ENCODE measurements at regions of chr6 and their contacts with region 1.

Region 1: GRCh38 chr6:35016502-35017321 is 124.4 kb downstream of the TCP11 start:
- DNase-seq: peak in 1 of 2 donors; percentile 64
- ATAC-seq: peak; percentile 80
- H3K4me3 ChIP-seq: peak overlapping the region; percentile 36 to 42
- H3K27ac ChIP-seq: peak overlapping the region; percentile 91 to 96
- H3K4me1 ChIP-seq: peaks cover 0 to 4% of the 10 kb centered on the region in 2 donors
- H3K27me3 ChIP-seq: no peaks in the 10 kb centered on the region

Region 2: GRCh38 chr6:33147807-33148666 is 1868.7 kb before region 1 on chr6:
- intact Hi-C with region 1: no loop called
- DNase-seq: no peak
- ATAC-seq: no peak
- H3K4me3 ChIP-seq: no peak overlapping the region
- H3K27ac ChIP-seq: no peak overlapping the region
- H3K4me1 ChIP-seq: no peaks in the 10 kb centered on the region
- H3K27me3 ChIP-seq: peaks cover 0 to 2% of the 10 kb centered on the region in 2 donors

Region 3: DNA sequence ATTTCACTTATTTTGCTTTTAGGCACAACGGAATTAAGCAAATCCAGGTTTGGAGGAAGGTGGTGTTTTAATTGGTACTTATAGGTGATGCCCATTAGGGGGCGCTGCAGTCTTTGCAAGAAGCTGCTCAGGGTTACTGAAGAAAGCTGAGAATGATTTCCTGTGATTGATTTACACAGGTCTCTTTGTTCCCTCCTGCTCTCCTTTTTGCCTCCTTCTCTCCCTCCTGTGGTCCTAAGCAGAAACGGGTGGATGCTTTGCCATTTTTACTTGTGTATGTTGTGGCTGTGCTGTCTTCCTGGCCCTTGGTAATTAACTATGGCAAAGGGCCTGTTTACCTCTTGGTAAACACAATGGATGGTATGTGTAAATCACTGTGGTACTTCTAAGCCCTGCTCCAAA is 29.9 kb before region 1 on chr6:
- intact Hi-C with region 1: loop called in 1 of 2 experiments (anchors 2 kb)
- DNase-seq: peak; percentile 64 to 85
- ATAC-seq: peak; percentile 89
- H3K4me3 ChIP-seq: no peak overlapping the region
- H3K27ac ChIP-seq: peak overlapping the region in 1 of 2 donors; percentile 38
- H3K4me1 ChIP-seq: no peaks in the 10 kb centered on the region
- H3K27me3 ChIP-seq: no peaks in the 10 kb centered on the region

Region 4: DNA sequence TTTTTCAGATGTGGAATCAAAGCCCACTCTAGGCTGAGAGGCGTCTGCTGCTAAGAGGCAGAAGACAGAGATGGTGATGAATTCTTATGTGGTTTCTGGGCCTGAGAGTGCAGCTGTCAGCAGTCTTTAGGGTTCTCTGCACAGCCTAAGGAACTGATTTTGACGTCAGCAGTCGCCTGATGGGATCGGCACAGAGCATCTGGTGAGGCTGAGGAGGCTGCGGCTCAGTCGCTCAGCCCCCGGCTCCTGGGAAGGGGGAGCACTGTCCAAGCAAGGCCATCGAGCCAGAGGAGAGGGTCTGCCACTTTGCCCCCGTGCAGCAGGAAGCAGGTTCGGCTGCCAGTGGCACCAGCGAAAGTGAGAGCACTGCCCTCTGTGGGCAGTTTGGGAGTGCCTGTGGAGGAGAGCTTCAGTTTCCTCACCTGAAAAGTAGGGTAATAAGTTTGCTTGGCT is 31.9 kb after region 1 on chr6:
- intact Hi-C with region 1: loop called in 1 of 2 experiments (anchors 2 kb)
- DNase-seq: peak in 1 of 2 donors; percentile 86
- ATAC-seq: peak; percentile 34
- H3K4me3 ChIP-seq: no peak overlapping the region
- H3K27ac ChIP-seq: peak overlapping the region in 1 of 2 donors; percentile 22
- H3K4me1 ChIP-seq: peaks cover 2 to 8% of the 10 kb centered on the region in 2 donors
- H3K27me3 ChIP-seq: no peaks in the 10 kb centered on the region

Region 5: GRCh38 chr6:35064757-35065440 is 48.2 kb after region 1 on chr6:
- intact Hi-C with region 1: loop called in 1 of 2 experiments (anchors 5 kb)
- DNase-seq: no peak
- ATAC-seq: no peak
- H3K4me3 ChIP-seq: no peak overlapping the region
- H3K27ac ChIP-seq: no peak overlapping the region
- H3K4me1 ChIP-seq: peaks cover 0 to 7% of the 10 kb centered on the region in 2 donors
- H3K27me3 ChIP-seq: no peaks in the 10 kb centered on the region

Region 6: GRCh38 chr6:35089935-35090505 is 73.3 kb after region 1 on chr6:
- intact Hi-C with region 1: loop called in 1 of 2 experiments (anchors 5 kb)
- DNase-seq: peak in 1 of 2 donors; percentile 39
- ATAC-seq: no peak
- H3K4me3 ChIP-seq: no peak overlapping the region
- H3K27ac ChIP-seq: peak overlapping the region in 1 of 2 donors; percentile 76
- H3K4me1 ChIP-seq: peaks cover 0 to 3% of the 10 kb centered on the region in 2 donors
- H3K27me3 ChIP-seq: no peaks in the 10 kb centered on the region

Measured in aorta (tissue), 5 donors.